ENCODE measurements at regions of chr17 and their contacts with region 1.

Region 1: DNA sequence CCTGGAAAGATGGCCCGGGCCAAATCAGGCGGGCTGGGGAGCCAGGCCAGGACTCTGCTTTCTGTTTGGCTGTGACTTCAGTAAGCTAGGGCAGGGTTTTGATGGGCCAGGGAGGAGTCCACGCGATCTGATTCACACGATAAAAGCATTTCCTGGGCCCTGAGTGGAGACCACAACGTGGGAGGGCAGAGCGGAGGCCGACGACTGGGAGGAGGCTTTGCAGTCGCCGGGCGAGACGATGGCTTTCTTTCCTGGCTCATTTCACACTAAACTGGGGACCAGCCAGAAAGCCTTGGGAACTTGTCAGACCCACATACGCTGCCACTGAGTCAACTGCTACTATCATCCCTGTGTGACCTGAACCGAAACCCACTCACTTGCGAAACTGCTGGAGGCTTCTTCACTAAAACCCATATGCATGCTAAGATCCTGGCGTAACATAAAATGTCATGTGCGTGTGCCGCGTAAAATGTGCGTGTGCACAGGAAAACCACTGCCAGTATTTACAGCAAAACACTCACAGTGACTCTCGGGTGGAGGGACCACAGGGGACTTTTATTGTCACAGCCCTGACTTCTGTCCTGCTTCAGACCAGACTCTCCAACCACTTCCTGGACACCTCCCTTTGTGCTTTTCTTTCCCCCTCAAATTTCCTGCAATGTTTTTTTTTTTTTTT is 14.2 kb upstream of the RHBDF2 start:
- H3K4me3 ChIP-seq: no peak overlapping the region
- H3K27ac ChIP-seq: no peak overlapping the region
- H3K4me1 ChIP-seq: no peaks in the 10 kb centered on the region
- CTCF ChIP-seq: no peak

Region 2: GRCh38 chr17:76446449-76447231 is 68.8 kb before region 1 on chr17:
- CTCF ChIA-PET with region 1: no interaction called
- POLR2A ChIA-PET with region 1: no interaction called
- H3K4me3 ChIP-seq: no peak overlapping the region
- H3K27ac ChIP-seq: no peak overlapping the region
- H3K4me1 ChIP-seq: peaks cover 40% of the 10 kb centered on the region
- CTCF ChIP-seq: no peak

Region 3: GRCh38 chr17:76547184-76547641 is 31.8 kb after region 1 on chr17:
- CTCF ChIA-PET with region 1: interaction called, 14 read pairs
- POLR2A ChIA-PET with region 1: no interaction called
- H3K4me3 ChIP-seq: no peak overlapping the region
- H3K27ac ChIP-seq: no peak overlapping the region
- H3K4me1 ChIP-seq: peaks cover 21% of the 10 kb centered on the region
- CTCF ChIP-seq: peak; percentile 86

Region 4: DNA sequence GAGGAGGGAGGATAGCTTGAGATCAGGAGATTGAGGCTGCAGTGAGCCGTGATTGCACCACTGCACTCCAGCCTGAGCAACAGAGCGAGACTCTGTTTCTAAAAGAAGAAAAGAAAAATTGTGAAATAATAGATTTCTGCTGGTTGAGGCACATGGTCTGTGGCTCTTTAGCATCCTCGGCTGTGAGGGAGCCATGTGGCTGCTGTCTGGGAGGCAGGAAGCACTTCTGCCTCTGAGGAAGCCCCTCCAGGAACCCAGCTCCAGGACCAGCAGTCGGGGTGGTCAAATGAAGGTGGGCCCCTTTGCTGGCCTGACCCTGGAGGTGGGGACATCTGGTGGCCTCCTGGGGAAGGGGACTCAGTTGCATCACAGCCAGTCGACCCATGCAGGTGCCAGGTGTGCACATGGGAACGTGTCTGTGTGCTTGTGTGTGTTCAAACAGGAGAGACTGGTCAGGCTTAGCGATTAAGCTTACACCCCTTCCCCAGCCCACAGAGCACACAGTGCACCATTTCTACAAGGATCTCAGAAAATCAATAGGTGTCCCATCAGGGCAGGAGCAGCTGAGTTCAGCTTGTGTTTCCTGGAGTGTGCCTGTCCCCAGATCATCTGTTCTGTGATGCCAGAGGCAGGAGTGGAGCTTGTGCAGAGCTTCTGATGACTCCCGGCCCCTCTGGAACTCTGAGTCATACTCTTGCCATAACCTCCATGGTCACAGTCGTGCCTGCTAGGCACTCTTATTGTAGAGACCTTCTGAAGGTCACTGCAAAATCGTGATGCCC is 328.5 kb after region 1 on chr17:
- CTCF ChIA-PET with region 1: no interaction called
- POLR2A ChIA-PET with region 1: no interaction called
- H3K4me3 ChIP-seq: no peak overlapping the region
- H3K27ac ChIP-seq: no peak overlapping the region
- H3K4me1 ChIP-seq: peaks cover 3% of the 10 kb centered on the region; the same call in 1 of the 2 replicates
- CTCF ChIP-seq: no peak; the same call in 1 of the 2 replicates

Measured in HEK293 (cell line).